Right cardiac atrium (tissue), 5 donors: ENCODE measurements at regions of chr6 and their contacts with region 1.

Region 1: DNA sequence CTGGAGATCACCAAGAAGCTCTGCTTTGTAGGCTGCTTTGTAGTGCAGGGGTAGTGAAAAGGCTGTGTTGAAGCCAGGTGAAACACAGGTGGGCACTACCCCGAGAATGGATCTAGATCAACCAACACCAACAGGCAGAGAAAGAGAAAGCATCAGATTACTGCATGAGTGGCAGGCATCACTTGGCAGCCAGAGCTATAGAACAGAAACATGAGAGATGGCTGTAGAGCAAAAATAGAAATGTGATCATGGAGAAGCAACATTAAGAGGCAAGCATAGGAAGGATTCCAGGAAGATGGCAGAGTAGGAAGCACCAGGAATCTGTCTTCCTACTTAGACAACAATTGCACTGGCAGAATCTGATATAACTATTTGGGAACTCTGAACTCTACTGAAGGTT is 311.1 kb upstream of the TCF21 start:
- DNase-seq: no peak
- ATAC-seq: no peak
- H3K4me3 ChIP-seq: no peak overlapping the region
- H3K27ac ChIP-seq: no peak overlapping the region
- H3K4me1 ChIP-seq: no peaks in the 10 kb centered on the region
- H3K27me3 ChIP-seq: no peaks in the 10 kb centered on the region

Region 2: GRCh38 chr6:132456700-132457143 is 1121.1 kb before region 1 on chr6:
- intact Hi-C with region 1: no loop called
- DNase-seq: peak; percentile 56 to 76 (median 74)
- ATAC-seq: peak; percentile 83 to 94
- H3K4me3 ChIP-seq: no peak overlapping the region
- H3K27ac ChIP-seq: no peak overlapping the region
- H3K4me1 ChIP-seq: no peaks in the 10 kb centered on the region
- H3K27me3 ChIP-seq: no peaks in the 10 kb centered on the region

Region 3: GRCh38 chr6:133916650-133917151 is 338.9 kb after region 1 on chr6:
- intact Hi-C with region 1: loop called in 1 of 4 experiments (anchors 10 kb)
- DNase-seq: peak; percentile 89 to 97 (median 92)
- ATAC-seq: peak; percentile 89 to 91
- H3K4me3 ChIP-seq: no peak overlapping the region
- H3K27ac ChIP-seq: no peak overlapping the region
- H3K4me1 ChIP-seq: no peaks in the 10 kb centered on the region
- H3K27me3 ChIP-seq: no peaks in the 10 kb centered on the region